ENCODE measurements at regions of chr13 and their contacts with region 1.

Region 1: GRCh38 chr13:97257800-97258799 is 36.0 kb downstream of the MBNL2 start:
- DNase-seq: peak; percentile 18 to 87
- H3K4me3 ChIP-seq: no peak overlapping the region
- H3K27ac ChIP-seq: peak overlapping the region; percentile 76 to 79
- H3K4me1 ChIP-seq: peaks cover 12 to 72% of the 10 kb centered on the region in 2 donors
- H3K27me3 ChIP-seq: no peaks in the 10 kb centered on the region
- CTCF ChIP-seq: no peak

Region 2: DNA sequence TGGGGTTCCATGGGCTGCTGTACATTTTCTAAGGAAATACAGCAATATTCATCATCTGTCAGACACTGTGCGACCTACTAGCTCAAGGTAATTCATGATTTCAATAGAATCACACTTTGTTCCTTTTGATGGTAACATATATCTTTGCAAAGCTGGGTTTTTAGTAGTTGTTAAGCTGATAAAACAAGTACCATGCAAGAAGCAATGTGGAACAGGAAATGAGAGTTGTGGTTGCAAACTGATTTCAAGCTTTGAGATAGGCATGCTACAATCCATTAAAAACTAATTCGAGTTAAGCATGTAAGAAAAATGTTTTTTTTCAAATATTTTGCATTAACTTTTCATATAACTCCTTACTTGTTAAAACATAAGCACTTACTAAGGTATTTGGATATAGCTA is 42.8 kb before region 1 on chr13:
- intact Hi-C with region 1: no loop called
- DNase-seq: no peak
- H3K4me3 ChIP-seq: no peak overlapping the region
- H3K27ac ChIP-seq: no peak overlapping the region
- H3K4me1 ChIP-seq: no peaks in the 10 kb centered on the region
- H3K27me3 ChIP-seq: no peaks in the 10 kb centered on the region
- CTCF ChIP-seq: no peak

Region 3: GRCh38 chr13:97275265-97275664 is 17.2 kb after region 1 on chr13:
- intact Hi-C with region 1: loop called (anchors 1 kb)
- DNase-seq: no peak
- H3K4me3 ChIP-seq: no peak overlapping the region
- H3K27ac ChIP-seq: peak overlapping the region; percentile 78 to 84
- H3K4me1 ChIP-seq: peaks cover 23 to 46% of the 10 kb centered on the region in 2 donors
- H3K27me3 ChIP-seq: no peaks in the 10 kb centered on the region
- CTCF ChIP-seq: no peak

Region 4: DNA sequence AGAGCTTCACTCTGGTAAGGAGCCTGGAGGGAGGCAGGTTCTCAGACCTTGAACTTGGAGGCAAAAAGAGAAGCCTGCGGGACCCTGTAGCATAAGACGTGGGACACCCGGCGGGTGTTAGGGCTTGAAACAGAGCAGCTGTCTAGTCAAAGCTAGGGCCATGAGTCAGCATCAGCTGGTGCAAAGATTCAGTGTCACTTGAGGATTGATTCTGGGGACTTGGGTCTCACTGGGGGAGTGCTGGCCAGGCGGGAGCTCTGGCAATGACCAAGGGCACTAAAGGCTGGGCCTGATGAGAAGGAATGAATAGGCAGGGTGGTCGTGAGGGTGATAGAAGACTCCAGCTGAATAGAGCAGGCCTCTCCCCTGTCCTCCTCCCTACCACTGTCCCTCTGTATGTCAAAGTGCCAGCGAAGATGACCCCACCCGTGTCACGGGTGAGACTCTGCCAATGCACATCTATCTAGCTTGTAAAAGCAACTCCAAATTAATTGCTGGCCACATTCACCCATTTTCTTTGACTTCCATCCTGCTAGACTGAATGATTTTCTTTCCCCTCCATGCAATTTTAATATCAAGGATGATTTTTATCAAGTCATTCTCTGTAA is 61.1 kb after region 1 on chr13:
- intact Hi-C with region 1: no loop called
- DNase-seq: no peak
- H3K4me3 ChIP-seq: no peak overlapping the region
- H3K27ac ChIP-seq: no peak overlapping the region
- H3K4me1 ChIP-seq: peaks cover 3 to 8% of the 10 kb centered on the region in 2 donors
- H3K27me3 ChIP-seq: no peaks in the 10 kb centered on the region
- CTCF ChIP-seq: no peak

Measured in ascending aorta (tissue), 2 donors.